A673 (cell line): ENCODE measurements at regions of chr3 and their contacts with region 1.

Region 1: GRCh38 chr3:109132801-109133473 is 3.6 kb upstream of the C3orf85 start:
- DNase-seq: no peak
- H3K4me3 ChIP-seq: no peak overlapping the region
- H3K27ac ChIP-seq: no peak overlapping the region
- H3K4me1 ChIP-seq: no peaks in the 10 kb centered on the region
- H3K27me3 ChIP-seq: no peaks in the 10 kb centered on the region
- CTCF ChIP-seq: no peak

Region 2: GRCh38 chr3:109112946-109113760 is 19.8 kb before region 1 on chr3:
- CTCF ChIA-PET with region 1: no interaction called
- POLR2A ChIA-PET with region 1: no interaction called
- intact Hi-C with region 1: loop called (anchors 1 kb)
- DNase-seq: no peak
- H3K4me3 ChIP-seq: no peak overlapping the region
- H3K27ac ChIP-seq: no peak overlapping the region
- H3K4me1 ChIP-seq: no peaks in the 10 kb centered on the region
- H3K27me3 ChIP-seq: no peaks in the 10 kb centered on the region
- CTCF ChIP-seq: no peak